Right ventricle myocardium inferior (tissue), 1 donor: ENCODE measurements at regions of chr15 and their contacts with region 1.

Region 1: DNA sequence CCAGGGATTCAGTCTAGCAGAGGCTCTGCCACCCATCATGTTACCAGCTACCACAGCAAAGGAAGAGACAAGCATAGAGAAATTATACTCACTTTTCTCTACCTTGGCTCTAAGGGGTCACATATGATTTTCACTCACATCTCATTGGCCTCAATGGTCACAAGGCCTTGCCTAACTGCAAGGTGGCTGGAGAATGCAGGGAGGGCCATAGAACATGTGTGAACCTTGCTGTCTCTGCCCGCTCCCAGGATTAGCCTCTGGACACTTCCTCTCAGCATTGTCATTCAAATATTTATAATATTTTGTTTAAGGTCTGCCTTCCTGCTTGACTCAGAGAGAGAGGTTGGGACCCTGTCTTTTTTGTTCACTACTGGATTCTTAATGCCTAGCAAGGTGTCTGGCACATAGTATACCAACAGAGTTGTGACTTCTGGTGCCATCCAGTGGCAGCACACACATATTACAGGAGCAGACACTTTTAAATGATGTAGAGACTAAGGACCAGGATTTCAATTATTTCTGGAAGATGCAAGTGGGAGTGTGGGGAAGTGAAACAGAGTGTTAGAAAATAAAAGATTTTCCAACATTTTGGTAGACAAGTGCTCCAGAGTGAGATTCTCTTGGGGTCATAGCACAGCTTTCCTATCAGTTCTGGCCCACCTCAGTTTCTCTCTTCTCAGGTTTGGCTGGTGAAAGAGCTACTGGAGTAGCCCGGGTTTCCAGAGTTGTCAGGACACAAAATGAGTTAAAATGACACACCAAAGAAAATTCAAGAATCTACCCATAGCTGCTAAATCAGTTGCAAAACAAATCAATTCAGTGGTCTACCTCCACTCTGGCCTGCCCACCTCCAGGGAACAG is 119.0 kb upstream of the RASGRP1 start:
- DNase-seq: no peak
- ATAC-seq: peak; percentile 54

Region 2: GRCh38 chr15:37995461-37996347 is 687.9 kb before region 1 on chr15:
- intact Hi-C with region 1: loop called (anchors 10 kb)
- DNase-seq: no peak
- ATAC-seq: peak; percentile 76

Region 3: DNA sequence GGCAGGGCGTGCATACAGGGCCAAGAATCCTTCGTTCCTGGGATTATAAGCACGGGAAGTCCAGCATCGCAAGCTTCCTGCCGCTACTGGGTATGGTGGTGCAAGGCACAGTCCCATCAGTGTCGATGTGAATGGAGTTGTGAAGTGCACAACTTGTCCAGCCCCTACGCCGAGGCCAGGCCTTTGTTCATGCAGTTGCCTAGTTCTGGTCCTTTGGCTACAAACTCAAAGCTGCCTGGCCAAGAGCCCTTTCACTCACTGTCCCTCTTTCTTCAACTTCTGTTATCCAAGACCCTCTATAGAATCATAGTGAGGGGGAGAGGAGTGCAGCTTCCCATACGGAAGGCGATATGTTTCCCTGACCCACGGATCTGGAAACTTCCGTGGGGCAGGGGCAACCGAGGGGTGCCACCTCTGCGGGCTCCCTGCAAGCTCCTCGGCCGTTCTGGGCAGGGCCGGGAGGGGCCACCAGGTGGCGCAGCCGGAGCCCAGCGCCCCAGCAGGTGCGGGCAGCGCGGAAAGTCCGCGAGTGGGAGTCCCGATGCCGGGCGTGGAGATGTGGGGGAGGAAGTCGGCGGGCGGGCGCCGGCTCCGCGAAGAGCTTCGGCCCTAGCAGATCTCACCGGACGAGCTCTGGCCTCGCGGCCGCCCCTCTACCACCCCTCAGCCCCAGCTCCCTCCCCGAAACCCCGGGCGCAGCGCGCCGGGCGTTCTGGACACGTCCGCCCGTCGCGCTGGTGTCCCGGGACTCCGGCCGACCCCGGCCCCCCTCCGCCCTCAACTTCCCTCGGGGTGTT is 119.7 kb before region 1 on chr15:
- intact Hi-C with region 1: loop called (anchors 5 kb)
- DNase-seq: peak; percentile 87
- ATAC-seq: peak; percentile 85

Region 4: DNA sequence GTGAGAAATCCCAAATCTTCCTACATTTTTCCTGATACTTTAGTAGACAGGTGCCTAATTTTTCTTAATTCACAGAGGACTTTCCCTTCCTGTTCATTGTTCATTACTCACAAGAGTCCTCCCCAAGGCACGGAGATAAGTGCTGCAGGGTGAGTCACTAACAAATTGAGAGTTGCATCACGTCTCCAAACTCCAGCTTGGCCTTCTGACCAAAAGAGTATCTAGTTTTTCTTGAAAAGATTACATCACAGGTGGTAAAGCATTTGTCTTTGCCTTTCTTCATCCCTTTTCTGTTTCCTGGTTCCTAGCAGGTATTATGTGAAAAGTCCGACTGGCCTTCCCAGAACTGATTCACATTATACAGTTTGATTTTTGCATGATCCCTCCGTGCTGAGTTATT is 94.1 kb before region 1 on chr15:
- intact Hi-C with region 1: loop called (anchors 5 kb)
- DNase-seq: no peak
- ATAC-seq: no peak